Activated T-helper 2 cell treated with anti-CD3 and anti-CD28 coated beads, Interferon-gamma antibody, Interleukin-2, Interleukin-4, amounts not matched to agents 10 μg/mL and 5 μg/mL and 100 μg/mL, durations not matched to agents 14 hours and 24 hours and 36 hours (primary cell): ENCODE measurements at regions of chr10 and their contacts with region 1.

Region 1: DNA sequence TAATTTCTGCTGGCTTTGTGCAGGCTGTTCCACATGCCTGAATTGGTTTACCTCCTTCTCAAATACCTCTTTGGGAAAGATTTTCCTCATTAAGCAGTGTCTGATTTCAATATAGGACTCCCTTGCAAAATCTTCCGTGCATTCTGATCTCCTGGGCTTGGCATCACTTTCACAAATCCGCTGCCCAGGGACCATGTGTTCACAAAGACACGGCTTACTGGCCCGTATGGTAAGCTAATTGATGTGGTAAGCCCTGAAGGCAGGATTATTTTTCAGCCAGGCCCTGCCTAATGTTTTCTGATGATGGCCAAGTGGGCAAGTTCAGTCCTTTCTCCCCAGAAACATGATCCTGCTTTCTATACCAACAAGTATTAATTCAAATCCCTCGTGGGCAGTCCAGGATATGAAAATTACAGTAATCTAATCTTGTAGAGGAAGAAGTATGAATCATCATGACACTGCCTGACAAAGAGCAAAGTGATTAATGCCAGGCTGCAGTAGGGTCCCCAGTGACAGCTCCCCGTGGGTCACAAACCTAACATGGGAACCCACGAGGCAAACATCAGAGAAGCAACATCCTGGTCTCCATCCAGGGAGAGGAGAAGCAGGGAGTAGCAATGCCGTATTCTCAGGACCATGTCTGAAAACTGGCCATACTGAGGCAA is 11.6 kb upstream of the SVIL start:
- DNase-seq: no peak
- H3K4me3 Mint-ChIP-seq: no peak overlapping the region
- H3K27ac Mint-ChIP-seq: no peak overlapping the region
- H3K4me1 Mint-ChIP-seq: peaks cover 36% of the 10 kb centered on the region
- H3K27me3 Mint-ChIP-seq: peaks cover 3% of the 10 kb centered on the region

Region 2: DNA sequence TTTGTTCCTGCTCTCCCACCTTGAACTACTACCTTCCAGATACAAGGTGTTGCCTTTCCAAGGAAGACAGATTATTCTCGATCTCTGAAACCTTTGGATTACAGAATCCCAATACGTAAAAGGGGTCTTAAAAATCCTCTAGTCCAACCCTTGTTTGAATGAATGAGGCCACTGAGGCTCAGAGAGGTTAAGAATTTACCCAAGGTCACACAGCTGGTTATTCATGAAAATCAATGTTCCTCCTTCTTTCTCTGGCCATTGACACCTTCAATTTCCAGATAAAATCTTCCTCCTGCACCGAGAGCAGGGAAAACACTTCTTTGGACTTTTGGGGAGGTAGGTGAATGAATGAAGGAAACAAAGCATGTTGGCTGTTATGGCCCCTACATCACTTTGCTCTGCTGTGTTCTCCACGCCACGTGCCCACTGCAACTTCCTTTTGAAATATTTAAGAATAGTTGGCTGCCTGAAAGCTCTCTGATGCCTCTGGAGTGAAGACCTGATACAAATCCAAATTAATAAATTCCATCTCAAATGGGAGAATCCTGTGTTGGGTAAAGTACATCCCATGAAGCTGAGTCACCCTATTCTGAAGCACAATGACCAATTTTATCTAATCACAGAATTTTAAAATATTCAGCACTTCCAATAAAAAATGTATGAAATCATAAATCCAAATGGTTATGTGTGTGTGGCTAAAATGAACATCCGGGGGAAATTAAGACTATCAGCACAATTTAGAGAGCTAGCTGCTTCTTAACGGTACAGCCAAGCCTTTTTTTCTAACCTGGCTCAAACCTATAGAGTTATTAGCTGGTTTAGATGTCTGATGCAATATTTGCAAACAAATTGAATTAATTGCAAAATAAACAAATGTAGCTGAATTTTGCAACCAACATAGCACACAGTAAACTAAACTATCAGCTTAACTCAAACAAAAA is 18.9 kb before region 1 on chr10:
- intact Hi-C with region 1: no loop called
- DNase-seq: no peak
- H3K4me3 Mint-ChIP-seq: no peak overlapping the region
- H3K27ac Mint-ChIP-seq: no peak overlapping the region
- H3K4me1 Mint-ChIP-seq: peaks cover 2% of the 10 kb centered on the region
- H3K27me3 Mint-ChIP-seq: no peaks in the 10 kb centered on the region

Region 3: GRCh38 chr10:29689001-29689400 is 42.6 kb after region 1 on chr10:
- intact Hi-C with region 1: loop called (anchors 5 kb)
- DNase-seq: no peak
- H3K4me3 Mint-ChIP-seq: no peak overlapping the region
- H3K27ac Mint-ChIP-seq: no peak overlapping the region
- H3K4me1 Mint-ChIP-seq: peaks cover 13% of the 10 kb centered on the region
- H3K27me3 Mint-ChIP-seq: peaks cover 5% of the 10 kb centered on the region

Region 4: DNA sequence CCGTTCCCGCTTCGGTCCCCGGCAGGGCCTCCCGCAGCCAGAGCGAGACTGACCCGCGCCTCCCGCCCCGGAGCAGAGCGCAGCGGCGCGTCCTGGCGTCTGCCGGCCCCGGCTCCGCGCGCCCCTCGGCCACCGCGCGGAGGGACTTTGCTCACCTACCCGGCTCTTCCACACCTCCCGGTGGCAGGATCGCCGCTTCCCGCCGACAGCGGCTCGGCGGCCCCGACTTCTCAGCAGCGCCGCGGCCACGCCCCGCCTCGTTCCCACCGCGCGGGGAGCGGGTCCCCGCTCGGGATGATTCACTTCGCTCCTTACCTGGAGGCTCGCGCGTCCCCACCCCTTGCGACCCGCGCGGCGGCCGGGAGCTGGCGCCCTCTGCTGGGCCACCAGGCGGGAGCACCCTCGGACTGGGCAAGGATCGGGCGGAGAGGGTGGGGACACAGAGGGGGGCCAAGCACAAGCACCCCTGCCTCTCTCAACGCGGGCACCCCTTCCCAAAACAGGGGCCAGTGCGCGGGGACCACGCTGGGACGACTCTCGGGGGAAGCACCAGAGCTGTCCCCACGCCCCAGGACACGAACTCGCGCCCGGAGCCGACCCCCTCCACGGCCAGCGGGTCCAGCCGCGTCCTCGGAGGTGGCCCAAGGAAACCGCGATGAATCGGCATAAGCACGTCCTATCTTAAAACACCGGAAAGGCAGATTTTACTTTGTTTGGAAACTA is 89.4 kb after region 1 on chr10:
- intact Hi-C with region 1: loop called (anchors 5 kb)
- DNase-seq: peak; percentile 79
- H3K4me3 Mint-ChIP-seq: peak overlapping the region; percentile 77
- H3K27ac Mint-ChIP-seq: peak overlapping the region; percentile 66
- H3K4me1 Mint-ChIP-seq: peaks cover 12% of the 10 kb centered on the region
- H3K27me3 Mint-ChIP-seq: peaks cover 36% of the 10 kb centered on the region